ENCODE measurements at regions of chr6 and their contacts with region 1.

Region 1: GRCh38 chr6:121944354-121944753 is 455.1 kb upstream of the HSF2 start:
- DNase-seq: no peak
- H3K4me3 ChIP-seq: no peak overlapping the region
- H3K27ac ChIP-seq: no peak overlapping the region
- H3K4me1 ChIP-seq: no peaks in the 10 kb centered on the region
- H3K27me3 ChIP-seq: no peaks in the 10 kb centered on the region
- CTCF ChIP-seq: no peak
- POLR2A ChIP-seq: no peak

Region 2: GRCh38 chr6:121890307-121890910 is 53.9 kb before region 1 on chr6:
- intact Hi-C with region 1: loop called (anchors 2 kb)
- DNase-seq: no peak
- H3K4me3 ChIP-seq: no peak overlapping the region
- H3K27ac ChIP-seq: no peak overlapping the region
- H3K4me1 ChIP-seq: no peaks in the 10 kb centered on the region
- H3K27me3 ChIP-seq: no peaks in the 10 kb centered on the region
- CTCF ChIP-seq: no peak
- POLR2A ChIP-seq: no peak